Common myeloid progenitor, CD34-positive (primary cell): ENCODE measurements at regions of chr18 and their contacts with region 1.

Region 1: DNA sequence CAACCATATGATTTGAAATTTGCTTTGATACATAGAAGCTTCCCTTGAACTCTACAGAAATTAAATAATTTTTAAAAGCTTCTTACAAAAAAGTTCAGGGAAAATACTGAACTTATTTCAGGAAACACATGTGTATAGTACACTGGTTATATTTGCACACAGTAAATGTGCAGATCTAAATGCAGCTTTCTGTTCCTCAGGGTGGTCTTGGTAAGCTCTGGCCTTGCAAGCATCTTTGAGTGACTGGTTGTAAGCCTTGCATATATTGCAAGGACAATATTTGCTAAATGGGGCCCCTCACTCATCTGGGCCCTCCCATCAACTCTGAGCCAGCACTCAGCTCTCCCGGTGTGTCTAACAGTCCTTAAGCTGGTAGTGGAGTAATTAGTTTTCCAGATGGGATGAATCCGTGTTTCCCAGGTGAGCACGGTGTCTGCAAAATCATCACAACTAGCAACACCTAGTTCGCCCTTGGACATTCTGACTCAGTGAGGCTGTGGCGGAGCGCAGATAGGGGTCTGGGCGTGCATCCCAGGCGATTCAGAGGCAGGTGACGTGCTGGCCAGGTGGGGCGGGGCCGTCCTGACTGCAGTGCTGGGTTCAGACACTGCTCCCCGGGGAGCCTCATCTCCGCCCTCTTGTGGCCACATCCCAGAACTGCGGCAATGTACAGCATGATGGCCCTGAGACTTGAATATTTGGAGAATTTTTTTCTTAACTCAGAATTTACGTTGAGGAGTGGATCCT is 149.6 kb downstream of the MBP start:
- DNase-seq: peak; percentile 75 to 88 (median 85)
- H3K4me3 ChIP-seq: peak overlapping the region in 2 of 7 experiments; percentile 32 to 46
- H3K27ac ChIP-seq: no peak overlapping the region
- H3K4me1 ChIP-seq: peaks cover 0 to 10% (median 4%) of the 10 kb centered on the region in 4 experiments
- H3K27me3 ChIP-seq: no peaks in the 10 kb centered on the region

Region 2: DNA sequence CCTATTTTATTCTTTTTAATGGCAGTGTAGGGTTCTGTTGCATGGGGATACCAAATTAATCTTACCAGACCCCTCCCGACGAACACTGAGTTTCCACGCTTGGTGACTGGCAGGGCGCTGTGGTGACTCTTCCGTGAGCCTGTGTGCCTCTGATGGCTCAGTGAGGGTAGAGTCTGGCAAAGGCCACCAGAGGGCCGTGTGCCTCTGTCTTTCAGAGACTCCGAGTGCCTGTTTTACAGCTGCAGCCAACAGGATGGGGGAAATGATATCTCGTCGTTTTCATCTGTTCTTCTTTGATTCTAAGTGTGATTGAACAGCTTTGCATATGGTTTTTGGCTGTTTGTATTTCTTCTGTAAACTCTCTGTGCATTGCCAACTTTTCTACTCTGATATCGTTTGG is 60.9 kb before region 1 on chr18:
- CTCF ChIA-PET with region 1: interaction called, 30 read pairs
- POLR2A ChIA-PET with region 1: no interaction called
- DNase-seq: peak; percentile 78 to 89 (median 87)
- H3K4me3 ChIP-seq: peak overlapping the region in 1 of 7 experiments; percentile 20
- H3K27ac ChIP-seq: no peak overlapping the region
- H3K4me1 ChIP-seq: peaks cover 0 to 9% (median 2%) of the 10 kb centered on the region in 4 experiments
- H3K27me3 ChIP-seq: no peaks in the 10 kb centered on the region

Region 3: DNA sequence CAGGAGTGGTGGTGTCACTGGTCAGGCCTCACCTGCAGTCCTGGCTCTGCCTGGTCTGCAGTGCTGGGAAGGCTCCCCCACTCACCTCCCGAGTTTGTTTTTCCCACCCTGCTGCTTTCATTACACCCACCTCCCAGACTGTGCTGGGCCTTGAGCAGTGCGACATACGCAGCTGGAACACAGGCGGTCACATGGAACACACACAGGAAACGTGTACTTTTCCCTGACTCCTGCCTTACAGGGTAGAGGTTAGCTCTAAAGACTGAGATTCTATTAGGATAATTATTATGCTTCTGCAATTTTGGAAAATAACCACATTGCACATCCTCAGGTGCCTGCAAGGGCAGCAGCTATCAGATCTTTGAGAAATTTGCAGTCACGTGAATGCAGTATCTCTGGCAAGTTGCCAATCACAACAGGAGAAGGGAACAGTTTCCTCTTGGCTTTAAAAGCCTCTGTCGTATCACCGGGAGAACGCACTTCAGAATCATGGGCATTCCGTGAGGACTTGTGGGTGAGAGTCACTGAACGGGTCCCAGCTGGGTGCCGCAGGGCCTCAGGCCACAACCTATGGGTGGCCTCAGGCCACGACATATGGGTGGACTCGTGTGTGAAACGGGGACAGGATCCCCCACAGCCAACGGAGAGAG is 24.2 kb before region 1 on chr18:
- CTCF ChIA-PET with region 1: interaction called, 18 read pairs
- POLR2A ChIA-PET with region 1: no interaction called
- DNase-seq: no peak
- H3K4me3 ChIP-seq: no peak overlapping the region
- H3K27ac ChIP-seq: no peak overlapping the region
- H3K4me1 ChIP-seq: no peaks in the 10 kb centered on the region
- H3K27me3 ChIP-seq: no peaks in the 10 kb centered on the region

Region 4: DNA sequence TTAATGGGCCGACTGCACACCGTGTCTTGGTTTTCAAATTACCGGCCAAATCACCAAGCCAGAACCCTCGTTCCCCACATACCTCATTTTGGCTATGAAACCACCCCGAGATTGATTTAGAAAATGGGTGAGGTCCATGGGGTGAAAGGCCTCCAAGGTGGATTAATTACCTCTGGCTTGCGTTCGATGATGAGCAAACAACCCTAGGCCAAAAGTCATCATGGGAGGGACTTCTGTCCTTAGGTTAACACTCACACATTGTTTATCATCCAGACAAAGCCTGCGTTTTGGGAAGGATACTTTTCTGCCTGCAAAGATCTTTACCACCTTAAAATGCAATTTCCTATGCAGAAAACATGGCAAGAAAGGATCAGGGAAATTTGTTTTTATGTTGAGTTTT is 315.2 kb after region 1 on chr18:
- CTCF ChIA-PET with region 1: no interaction called
- POLR2A ChIA-PET with region 1: no interaction called
- DNase-seq: no peak
- H3K4me3 ChIP-seq: no peak overlapping the region
- H3K27ac ChIP-seq: no peak overlapping the region
- H3K4me1 ChIP-seq: no peaks in the 10 kb centered on the region
- H3K27me3 ChIP-seq: peaks cover 0 to 3% (median 2%) of the 10 kb centered on the region in 5 experiments